Right lobe of liver (tissue), 6 donors: ENCODE measurements at regions of chr15 and their contacts with region 1.

Region 1: DNA sequence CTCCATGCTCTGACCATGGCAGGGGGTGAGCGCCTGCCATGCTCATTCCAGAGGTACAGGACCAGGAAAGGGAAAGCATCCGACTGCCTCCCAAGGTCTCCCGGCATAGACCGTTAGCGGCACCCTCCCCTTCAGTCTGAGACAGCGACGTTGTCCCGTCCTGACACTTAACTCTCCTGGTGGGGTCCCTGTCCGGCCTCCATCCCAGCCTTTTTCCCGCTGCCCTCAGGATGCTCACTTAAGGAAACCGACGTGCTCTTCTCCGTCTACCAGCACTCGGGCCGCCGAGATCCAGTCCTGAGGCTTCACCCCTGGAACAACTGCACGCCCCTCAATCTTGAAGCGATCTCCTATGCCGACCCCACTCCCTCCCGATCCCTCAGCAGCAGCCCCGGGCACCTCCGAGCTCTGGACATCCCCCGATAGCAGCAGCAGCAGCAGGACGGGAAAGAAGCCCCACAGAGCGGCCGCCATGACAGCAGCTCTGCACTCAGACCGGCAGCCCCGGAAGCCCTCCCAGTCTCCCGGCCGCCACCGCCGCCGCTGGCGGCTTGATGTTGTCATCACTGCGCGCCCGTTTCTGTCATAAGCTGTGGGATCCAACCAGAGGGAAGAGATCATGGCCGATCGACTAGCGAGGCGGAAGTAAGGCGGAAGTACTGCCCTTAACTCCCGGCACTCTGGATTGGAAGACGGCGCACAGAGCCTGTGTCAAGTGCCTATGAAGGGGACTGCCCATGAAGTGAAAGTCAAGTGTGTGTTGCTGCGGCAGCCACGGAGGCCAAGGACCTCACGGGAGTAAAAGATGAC is at the starts of genes EMC7 and PGBD4:
- DNase-seq: peak; percentile 98 to 99 (median 99)
- ATAC-seq: peak; percentile 99 to 100 (median 100)
- H3K4me3 ChIP-seq: peak within 1 kb of the TSS; percentile 63 to 90 (median 89)
- H3K27ac ChIP-seq: peak within 1 kb of the TSS; percentile 70 to 82 (median 73)
- H3K4me1 ChIP-seq: peaks cover 0 to 11% (median 0%) of the 10 kb centered on the region in 4 donors
- H3K27me3 ChIP-seq: no peaks in the 10 kb centered on the region
- CTCF ChIP-seq: peak in 1 of 4 donors; percentile 4
- POLR2A ChIP-seq: peak; percentile 90
- total RNA-seq, gene EMC7: 30.4 to 49.4 (median 41.6) TPM
- total RNA-seq, gene PGBD4: 0.56 to 0.98 (median 0.83) TPM

Region 2: GRCh38 chr15:33994005-33994615 is 107.5 kb before region 1 on chr15:
- intact Hi-C with region 1: no loop called
- DNase-seq: no peak
- ATAC-seq: no peak
- H3K4me3 ChIP-seq: no peak overlapping the region
- H3K27ac ChIP-seq: no peak overlapping the region
- H3K4me1 ChIP-seq: no peaks in the 10 kb centered on the region
- H3K27me3 ChIP-seq: no peaks in the 10 kb centered on the region
- CTCF ChIP-seq: peak in 3 of 4 donors; percentile 13 to 27 (median 16)
- POLR2A ChIP-seq: no peak

Region 3: GRCh38 chr15:34006381-34006780 is 95.2 kb before region 1 on chr15:
- intact Hi-C with region 1: no loop called
- DNase-seq: no peak
- ATAC-seq: no peak
- H3K4me3 ChIP-seq: no peak overlapping the region
- H3K27ac ChIP-seq: no peak overlapping the region
- H3K4me1 ChIP-seq: no peaks in the 10 kb centered on the region
- H3K27me3 ChIP-seq: no peaks in the 10 kb centered on the region
- CTCF ChIP-seq: no peak
- POLR2A ChIP-seq: no peak

Region 4: GRCh38 chr15:34179234-34179633 is 77.7 kb after region 1 on chr15:
- intact Hi-C with region 1: no loop called
- DNase-seq: no peak
- ATAC-seq: no peak
- H3K4me3 ChIP-seq: no peak overlapping the region
- H3K27ac ChIP-seq: no peak overlapping the region
- H3K4me1 ChIP-seq: no peaks in the 10 kb centered on the region
- H3K27me3 ChIP-seq: no peaks in the 10 kb centered on the region
- CTCF ChIP-seq: no peak
- POLR2A ChIP-seq: no peak

Region 5: GRCh38 chr15:34209421-34210282 is 108.1 kb after region 1 on chr15 and contains the start of gene KATNBL1:
- intact Hi-C with region 1: loop called in 1 of 2 experiments (anchors 10 kb)
- DNase-seq: peak; percentile 98 to 99 (median 98)
- ATAC-seq: peak; percentile 98 to 99 (median 98)
- H3K4me3 ChIP-seq: peak within 1 kb of the TSS; percentile 54 to 75 (median 70)
- H3K27ac ChIP-seq: peak within 1 kb of the TSS; percentile 30 to 75 (median 67)
- H3K4me1 ChIP-seq: peaks cover 0 to 8% (median 4%) of the 10 kb centered on the region in 4 donors
- H3K27me3 ChIP-seq: no peaks in the 10 kb centered on the region
- CTCF ChIP-seq: peak; percentile 90 to 98 (median 94)
- POLR2A ChIP-seq: peak; percentile 98
- total RNA-seq, gene KATNBL1: 12.4 to 22.4 (median 17.6) TPM

Region 6: GRCh38 chr15:34223904-34224596 is 122.5 kb after region 1 on chr15:
- intact Hi-C with region 1: loop called in 1 of 2 experiments (anchors 10 kb)
- DNase-seq: no peak
- ATAC-seq: peak; percentile 48 to 59 (median 52)
- H3K4me3 ChIP-seq: peak overlapping the region; percentile 81 to 98 (median 86)
- H3K27ac ChIP-seq: peak overlapping the region; percentile 78 to 89 (median 85)
- H3K4me1 ChIP-seq: peaks cover 0 to 9% (median 3%) of the 10 kb centered on the region in 4 donors
- H3K27me3 ChIP-seq: no peaks in the 10 kb centered on the region
- CTCF ChIP-seq: peak in 1 of 4 donors; percentile 6
- POLR2A ChIP-seq: no peak